T-cell (primary cell): ENCODE measurements at regions of chr1 and their contacts with region 1.

Region 1: DNA sequence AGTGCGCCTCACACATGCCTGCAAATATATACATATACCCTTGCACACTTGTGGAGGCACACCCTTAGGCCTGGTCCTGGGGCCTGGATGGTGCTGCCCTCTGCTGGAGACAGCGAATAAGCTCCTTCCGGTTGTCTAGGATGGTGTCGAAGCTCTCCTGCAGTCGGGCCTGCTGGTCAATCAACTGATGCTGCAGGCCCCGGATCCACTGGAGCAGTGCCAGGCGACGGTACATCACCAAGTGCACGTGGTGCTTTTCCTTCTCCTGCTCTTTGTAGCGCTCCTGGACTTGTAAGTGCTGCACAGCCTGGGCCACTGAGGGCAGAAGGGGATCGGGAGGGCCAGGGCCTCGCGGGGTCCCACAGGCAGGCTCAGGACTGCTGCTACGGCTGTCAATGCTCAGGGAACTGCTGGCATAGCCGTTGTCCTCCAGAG is 3.1 kb downstream of the C1orf216 start:
- DNase-seq: peak; percentile 49 to 86 (median 71)
- ATAC-seq: peak; percentile 53 to 63 (median 56)
- H3K4me3 ChIP-seq: no peak overlapping the region
- H3K4me3 Mint-ChIP-seq: peak overlapping the region in 1 of 3 donors; percentile 39
- H3K27ac ChIP-seq: no peak overlapping the region
- H3K27ac Mint-ChIP-seq: no peak overlapping the region
- H3K4me1 ChIP-seq: peaks cover 3 to 40% of the 10 kb centered on the region in 2 experiments
- H3K4me1 Mint-ChIP-seq: peaks cover 31 to 42% (median 32%) of the 10 kb centered on the region in 3 donors
- H3K27me3 ChIP-seq: peaks cover 0 to 3% of the 10 kb centered on the region in 2 experiments
- H3K27me3 Mint-ChIP-seq: no peaks in the 10 kb centered on the region

Region 2: DNA sequence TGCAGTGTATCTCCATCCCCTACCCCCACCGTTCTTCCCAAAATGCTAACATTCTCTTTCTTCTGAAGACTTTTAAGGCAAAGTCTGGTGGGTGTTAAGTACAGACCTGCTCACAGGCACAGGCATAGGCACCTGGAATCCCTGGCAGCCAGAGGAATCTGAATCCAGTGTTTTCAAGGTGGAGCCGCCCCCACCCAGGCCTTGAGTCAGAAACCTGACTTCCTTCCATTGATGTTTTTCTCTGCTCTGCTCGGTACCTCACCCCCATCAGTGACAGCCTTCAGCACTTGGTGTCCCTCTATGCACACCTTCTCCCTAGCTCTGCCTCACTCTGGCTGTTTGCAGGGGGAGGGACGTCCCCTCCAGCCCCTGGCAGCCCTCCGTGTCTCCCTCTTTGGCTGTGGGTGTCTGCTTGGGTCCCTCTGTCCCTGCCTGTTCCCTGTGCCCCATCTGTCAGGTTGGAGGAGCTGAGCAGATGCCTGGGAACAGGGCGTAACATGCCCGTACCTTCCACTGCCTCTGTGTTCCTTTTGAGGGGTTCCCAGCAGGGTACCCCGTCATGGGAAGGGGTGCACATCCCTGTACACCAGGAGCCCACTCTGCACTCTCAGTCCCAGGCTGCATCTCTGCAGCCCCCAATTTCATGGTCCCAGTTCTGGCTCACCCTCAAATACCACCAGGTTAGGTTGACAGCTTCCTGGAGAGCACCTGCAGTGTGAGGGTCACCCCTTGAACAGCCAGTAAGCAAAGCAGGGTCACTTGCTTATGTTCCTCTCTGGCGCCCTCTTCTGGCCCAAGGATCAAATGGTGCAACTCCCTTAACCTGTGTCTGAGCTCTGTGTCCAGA is 151.3 kb before region 1 on chr1:
- CTCF ChIA-PET with region 1: interaction called, 6 to 21 read pairs
- POLR2A ChIA-PET with region 1: interaction called in 1 of 2 experiments, 3 read pairs
- DNase-seq: peak; percentile 48 to 89 (median 73)
- ATAC-seq: peak; percentile 61 to 76 (median 70)
- H3K4me3 ChIP-seq: no peak overlapping the region
- H3K4me3 Mint-ChIP-seq: peak overlapping the region in 1 of 3 donors; percentile 28
- H3K27ac ChIP-seq: no peak overlapping the region
- H3K27ac Mint-ChIP-seq: peak overlapping the region; percentile 56 to 76
- H3K4me1 ChIP-seq: peaks cover 0 to 16% of the 10 kb centered on the region in 2 experiments
- H3K4me1 Mint-ChIP-seq: peaks cover 40 to 47% (median 44%) of the 10 kb centered on the region in 3 donors
- H3K27me3 ChIP-seq: no peaks in the 10 kb centered on the region
- H3K27me3 Mint-ChIP-seq: no peaks in the 10 kb centered on the region

Region 3: GRCh38 chr1:35769188-35769758 is 53.7 kb after region 1 on chr1:
- CTCF ChIA-PET with region 1: interaction called in 1 of 2 experiments, 11 read pairs
- POLR2A ChIA-PET with region 1: no interaction called
- DNase-seq: peak; percentile 53 to 88 (median 74)
- ATAC-seq: peak; percentile 82 to 91 (median 90)
- H3K4me3 ChIP-seq: peak overlapping the region; percentile 86 to 89
- H3K4me3 Mint-ChIP-seq: peak overlapping the region; percentile 81 to 91 (median 88)
- H3K27ac ChIP-seq: peak overlapping the region; percentile 74
- H3K27ac Mint-ChIP-seq: peak overlapping the region; percentile 52 to 64
- H3K4me1 ChIP-seq: peaks cover 2 to 14% of the 10 kb centered on the region in 2 experiments
- H3K4me1 Mint-ChIP-seq: peaks cover 0 to 13% (median 6%) of the 10 kb centered on the region in 3 donors
- H3K27me3 ChIP-seq: no peaks in the 10 kb centered on the region
- H3K27me3 Mint-ChIP-seq: no peaks in the 10 kb centered on the region